PC-3 (cell line): ENCODE measurements at regions of chr2 and their contacts with region 1.

Region 1: GRCh38 chr2:199861132-199861774 is 10.3 kb upstream of the FTCDNL1 start:
- DNase-seq: peak; percentile 47
- ATAC-seq: 0 out of 2 replicates have a peak, but pooled peaks have one; percentile 27
- H3K4me3 ChIP-seq: no peak overlapping the region
- H3K27ac ChIP-seq: no peak overlapping the region
- H3K4me1 ChIP-seq: no peaks in the 10 kb centered on the region
- H3K27me3 ChIP-seq: peaks cover 52% of the 10 kb centered on the region
- CTCF ChIP-seq: peak; percentile 76

Region 2: GRCh38 chr2:198309673-198310280 is 1551.5 kb before region 1 on chr2:
- CTCF ChIA-PET with region 1: no interaction called
- POLR2A ChIA-PET with region 1: no interaction called
- intact Hi-C with region 1: loop called (anchors 5 kb)
- DNase-seq: peak; percentile 74
- ATAC-seq: peak; percentile 38; the same call in 1 of the 2 replicates
- H3K4me3 ChIP-seq: no peak overlapping the region
- H3K27ac ChIP-seq: no peak overlapping the region
- H3K4me1 ChIP-seq: no peaks in the 10 kb centered on the region
- H3K27me3 ChIP-seq: peaks cover 37% of the 10 kb centered on the region
- CTCF ChIP-seq: peak; percentile 81

Region 3: DNA sequence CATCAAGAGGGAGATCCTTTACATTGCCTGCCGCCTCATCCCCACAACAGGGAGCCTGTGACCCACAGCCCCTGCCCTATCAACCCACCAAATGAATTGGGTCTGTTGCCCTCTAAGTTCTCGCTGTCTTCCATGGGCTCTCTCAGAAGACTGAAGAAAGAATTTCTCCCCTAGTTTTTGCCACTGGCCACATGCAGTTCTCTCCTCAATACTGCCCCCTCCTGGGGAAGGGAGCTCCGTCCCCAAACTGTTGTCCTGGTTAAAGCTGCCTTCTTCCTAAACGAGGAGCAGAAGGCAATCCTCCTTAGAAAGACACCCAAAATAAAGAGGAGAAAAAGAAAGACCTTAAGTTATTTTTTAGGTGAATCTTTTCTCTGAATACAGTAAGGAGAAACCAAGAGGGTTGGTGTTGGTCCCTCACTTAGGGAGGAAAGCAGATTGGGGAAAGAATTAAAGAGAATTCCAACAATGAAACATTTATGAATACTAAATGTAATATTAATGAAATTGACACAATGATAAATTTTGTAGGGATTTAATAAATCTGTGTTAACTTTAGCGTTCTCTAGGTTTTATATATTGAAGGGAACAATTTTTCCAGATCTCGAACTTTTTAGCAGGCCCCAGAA is 372.4 kb before region 1 on chr2:
- CTCF ChIA-PET with region 1: interaction called, 3 read pairs
- POLR2A ChIA-PET with region 1: no interaction called
- intact Hi-C with region 1: loop called (anchors 5 kb)
- DNase-seq: peak; percentile 78
- ATAC-seq: peak; percentile 45; the same call in 1 of the 2 replicates
- H3K4me3 ChIP-seq: no peak overlapping the region
- H3K27ac ChIP-seq: no peak overlapping the region
- H3K4me1 ChIP-seq: no peaks in the 10 kb centered on the region
- H3K27me3 ChIP-seq: no peaks in the 10 kb centered on the region
- CTCF ChIP-seq: peak; percentile 93

Region 4: GRCh38 chr2:199602271-199602895 is 258.9 kb before region 1 on chr2:
- CTCF ChIA-PET with region 1: no interaction called
- POLR2A ChIA-PET with region 1: no interaction called
- intact Hi-C with region 1: loop called (anchors 10 kb)
- DNase-seq: peak; percentile 13
- ATAC-seq: peak; percentile 33; the same call in 1 of the 2 replicates
- H3K4me3 ChIP-seq: no peak overlapping the region
- H3K27ac ChIP-seq: no peak overlapping the region
- H3K4me1 ChIP-seq: no peaks in the 10 kb centered on the region
- H3K27me3 ChIP-seq: peaks cover 62% of the 10 kb centered on the region
- CTCF ChIP-seq: 0 out of 2 replicates have a peak, but pooled peaks have one; percentile 17

Region 5: DNA sequence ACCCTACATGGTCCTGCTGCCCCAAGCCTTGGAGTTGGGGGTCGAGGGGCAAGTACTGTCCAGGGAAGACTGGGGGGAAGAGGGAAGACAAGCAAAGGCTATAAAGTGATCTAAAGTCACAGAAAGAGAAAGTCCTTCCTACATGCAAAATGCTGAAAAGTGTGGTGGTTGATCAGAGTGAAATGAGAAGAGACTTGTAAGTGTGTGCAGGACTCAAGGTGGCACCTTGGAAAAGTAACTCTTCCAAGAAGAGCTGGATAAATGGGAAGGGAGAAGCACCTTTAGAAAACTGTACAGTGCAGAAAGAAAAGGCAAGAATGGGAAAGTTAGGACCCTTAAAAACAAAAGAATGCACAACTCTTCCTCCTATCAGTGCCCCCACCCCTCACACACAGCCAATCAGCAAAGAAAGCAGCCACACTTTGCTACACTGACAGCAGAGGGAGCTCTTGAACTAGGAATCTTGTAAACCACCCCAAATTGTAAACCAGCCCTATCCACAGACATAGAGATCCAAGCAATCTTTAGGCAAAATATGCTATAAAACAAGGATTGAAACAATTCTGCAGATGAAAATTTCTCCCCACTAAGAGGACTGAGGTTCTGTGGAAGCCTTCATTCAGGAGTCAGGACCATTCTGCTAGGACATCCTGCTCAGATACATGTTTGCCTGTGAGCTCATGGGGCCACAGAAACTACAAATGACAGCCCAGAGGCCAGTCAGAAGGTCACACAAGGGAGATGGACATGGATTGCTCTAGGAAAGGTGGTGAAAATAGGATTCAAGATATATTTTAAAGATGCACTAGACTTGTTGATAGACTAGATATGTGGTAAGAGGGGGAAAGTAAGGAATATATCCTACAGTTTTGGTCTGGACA is 156.7 kb before region 1 on chr2:
- CTCF ChIA-PET with region 1: no interaction called
- POLR2A ChIA-PET with region 1: no interaction called
- intact Hi-C with region 1: loop called (anchors 1 kb)
- DNase-seq: peak; percentile 74
- ATAC-seq: peak; percentile 82
- H3K4me3 ChIP-seq: no peak overlapping the region
- H3K27ac ChIP-seq: no peak overlapping the region
- H3K4me1 ChIP-seq: no peaks in the 10 kb centered on the region
- H3K27me3 ChIP-seq: no peaks in the 10 kb centered on the region; the same call in 1 of the 2 replicates
- CTCF ChIP-seq: peak; percentile 90

Region 6: GRCh38 chr2:199739413-199740110 is 121.7 kb before region 1 on chr2:
- CTCF ChIA-PET with region 1: no interaction called
- POLR2A ChIA-PET with region 1: no interaction called
- intact Hi-C with region 1: loop called (anchors 1 kb)
- DNase-seq: peak; percentile 78
- ATAC-seq: peak; percentile 62
- H3K4me3 ChIP-seq: no peak overlapping the region
- H3K27ac ChIP-seq: no peak overlapping the region
- H3K4me1 ChIP-seq: peaks cover 16% of the 10 kb centered on the region
- H3K27me3 ChIP-seq: peaks cover 37% of the 10 kb centered on the region
- CTCF ChIP-seq: peak; percentile 98

Region 7: GRCh38 chr2:199940373-199940772 is 79.1 kb after region 1 on chr2:
- CTCF ChIA-PET with region 1: no interaction called
- POLR2A ChIA-PET with region 1: interaction called, 5 read pairs
- intact Hi-C with region 1: loop called (anchors 2 kb)
- DNase-seq: peak; percentile 43
- ATAC-seq: peak; percentile 50
- H3K4me3 ChIP-seq: no peak overlapping the region
- H3K27ac ChIP-seq: no peak overlapping the region
- H3K4me1 ChIP-seq: no peaks in the 10 kb centered on the region
- H3K27me3 ChIP-seq: no peaks in the 10 kb centered on the region
- CTCF ChIP-seq: peak; percentile 62